Motor neuron (in vitro differentiated cells): ENCODE measurements at regions of chr15 and their contacts with region 1.

Region 1: DNA sequence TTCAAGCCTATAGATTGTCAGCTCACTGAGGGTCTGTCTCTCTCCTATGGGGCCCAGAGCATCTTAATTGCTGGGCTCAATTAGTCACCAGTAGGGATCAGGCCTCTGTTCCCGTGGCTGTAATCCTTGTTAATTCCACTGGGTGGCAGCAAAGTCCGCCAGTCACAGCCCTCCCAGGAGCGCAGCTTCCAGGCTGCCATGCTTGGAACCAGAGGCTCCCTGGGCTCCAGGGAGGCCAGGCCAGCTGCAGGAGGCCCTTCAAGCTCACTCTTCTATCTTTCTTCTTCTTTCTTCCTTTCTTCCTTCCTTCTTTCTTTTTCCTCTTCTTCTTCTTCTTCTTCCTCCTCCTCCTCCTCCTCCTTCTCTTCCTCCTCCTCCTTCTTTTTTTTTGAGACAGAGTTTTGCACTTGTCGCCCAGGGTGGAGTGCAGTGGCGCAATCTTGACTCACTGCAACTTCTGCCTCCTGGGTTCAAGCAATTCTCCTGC is 14.4 kb downstream of the RNU5B-1 start:
- ATAC-seq: peak; percentile 86 to 98 (median 92)
- H3K4me3 ChIP-seq: no peak overlapping the region
- H3K27ac ChIP-seq: no peak overlapping the region
- H3K4me1 ChIP-seq: peaks cover 5 to 9% of the 10 kb centered on the region in 2 donors

Region 2: DNA sequence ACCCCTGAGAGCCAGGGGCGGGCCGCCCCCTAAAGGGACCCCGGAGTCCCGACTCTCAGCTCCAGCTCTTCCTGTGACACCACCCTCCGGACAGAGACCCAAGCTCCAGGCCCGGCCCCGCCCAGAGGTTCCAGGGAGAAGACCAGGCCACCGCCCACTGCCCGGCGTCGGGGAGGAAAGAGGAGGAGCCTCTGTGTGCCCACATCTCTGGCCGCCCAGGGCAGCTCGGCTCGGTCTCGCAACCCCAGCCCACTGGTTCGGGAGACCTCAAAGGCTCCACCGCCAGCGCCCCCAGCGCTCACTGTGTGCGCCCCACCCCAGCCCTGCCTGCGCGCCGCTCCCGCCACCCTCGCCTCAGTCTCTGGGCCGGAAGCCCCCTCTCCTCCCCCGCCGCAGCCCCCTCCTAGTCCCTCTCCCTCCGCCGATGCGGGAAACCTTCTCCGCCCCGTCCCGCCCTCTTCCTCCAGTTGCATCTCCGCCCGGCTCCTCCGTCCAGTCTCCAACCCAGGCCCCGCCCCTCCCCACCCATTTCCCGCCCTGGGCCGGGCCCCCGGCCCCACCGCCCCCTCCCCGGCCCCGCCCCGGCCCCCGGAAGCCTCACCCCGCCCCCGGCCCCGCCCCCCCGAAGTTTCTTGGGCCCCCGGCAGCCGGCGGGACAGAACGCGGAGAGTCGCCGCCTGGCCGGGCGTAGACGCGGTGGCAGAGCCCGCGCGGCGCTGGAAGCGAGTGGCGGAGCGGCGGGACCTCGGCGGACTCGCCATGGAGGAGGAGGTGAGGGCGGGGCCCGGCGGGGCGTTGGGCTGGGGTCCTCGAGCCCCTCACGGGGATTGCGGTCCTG is 477.4 kb before region 1 on chr15 and contains the start of gene PLEKHO2:
- in situ Hi-C with region 1: no loop called
- ATAC-seq: peak; percentile 70 to 94 (median 90)
- H3K4me3 ChIP-seq: peak within 1 kb of the TSS; percentile 40 to 76 (median 54)
- H3K27ac ChIP-seq: peak within 1 kb of the TSS; percentile 20 to 76
- H3K4me1 ChIP-seq: peaks cover 4 to 22% of the 10 kb centered on the region in 2 donors
- total RNA-seq, gene PLEKHO2: 2.3 to 57.2 (median 6.5) TPM

Region 3: DNA sequence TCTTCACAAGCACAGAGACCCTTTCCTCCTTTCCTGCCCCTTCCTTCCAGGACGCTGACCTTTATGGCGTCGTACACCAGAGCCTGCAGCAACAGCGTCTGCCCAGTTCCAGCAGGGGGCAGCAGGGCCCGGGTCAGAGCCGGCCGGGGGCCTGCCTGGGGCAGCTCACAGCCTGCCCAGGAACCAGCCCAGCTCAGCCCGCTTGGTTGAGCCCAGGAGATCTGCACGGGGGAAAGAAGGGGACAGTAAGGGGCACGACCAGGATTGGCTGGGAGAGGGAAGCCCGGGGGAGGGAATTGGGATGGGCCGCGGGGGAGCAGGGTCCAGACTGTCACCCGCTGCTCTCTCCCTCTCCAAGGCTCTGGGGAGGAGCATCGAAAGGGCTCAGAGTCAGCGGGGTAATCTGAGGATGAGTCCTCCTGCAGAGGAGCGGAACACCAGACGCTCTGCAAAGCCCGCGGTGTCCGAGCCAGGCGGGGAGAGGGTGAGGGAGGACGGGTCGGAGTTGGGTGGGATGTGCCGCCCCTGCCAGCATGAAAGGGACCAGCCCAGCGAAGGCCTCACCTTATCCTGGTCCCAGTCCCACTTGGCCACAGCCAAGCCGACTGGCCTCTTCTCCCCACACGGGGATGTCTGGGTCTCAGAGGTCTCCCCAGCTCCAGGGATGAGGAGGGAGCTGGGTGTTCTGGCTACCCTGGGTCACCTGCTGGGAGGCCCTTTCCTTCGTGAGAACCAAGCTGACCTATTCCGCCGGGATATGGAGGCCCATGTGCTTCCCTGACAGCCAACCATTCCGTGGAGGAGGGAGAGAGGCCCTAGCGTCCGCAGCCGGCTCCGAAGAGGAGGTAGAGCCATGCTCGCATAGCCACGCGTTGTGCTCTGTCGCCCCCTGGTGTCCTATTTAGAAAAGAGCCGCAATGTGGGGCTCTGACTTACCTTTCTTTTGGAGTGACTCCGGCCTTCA is 66.3 kb after region 1 on chr15:
- in situ Hi-C with region 1: loop called in 7 of 9 experiments (anchors 5 to 10 kb)
- ATAC-seq: peak; percentile 78 to 95 (median 84)
- H3K4me3 ChIP-seq: no peak overlapping the region
- H3K27ac ChIP-seq: peak overlapping the region; percentile 60 to 70
- H3K4me1 ChIP-seq: peaks cover 30 to 47% of the 10 kb centered on the region in 2 donors

Region 4: GRCh38 chr15:65392368-65392767 is 73.5 kb after region 1 on chr15:
- in situ Hi-C with region 1: loop called in 7 of 9 experiments (anchors 5 to 10 kb)
- ATAC-seq: no peak
- H3K4me3 ChIP-seq: no peak overlapping the region
- H3K27ac ChIP-seq: no peak overlapping the region
- H3K4me1 ChIP-seq: no peaks in the 10 kb centered on the region

Region 5: GRCh38 chr15:65611888-65612615 is 293.1 kb after region 1 on chr15:
- in situ Hi-C with region 1: no loop called
- ATAC-seq: no peak
- H3K4me3 ChIP-seq: peak overlapping the region in 2 of 5 donors; percentile 68 to 74
- H3K27ac ChIP-seq: peak overlapping the region in 1 of 2 donors; percentile 81
- H3K4me1 ChIP-seq: peaks cover 18 to 19% of the 10 kb centered on the region in 2 donors